AG04450 (cell line): ENCODE measurements at regions of chr2 and their contacts with region 1.

Region 1: GRCh38 chr2:163191372-163191771 is 352.8 kb upstream of the KCNH7 start:
- DNase-seq: no peak
- H3K4me3 ChIP-seq: no peak overlapping the region
- H3K27ac ChIP-seq: no peak overlapping the region
- H3K27me3 ChIP-seq: no peaks in the 10 kb centered on the region
- CTCF ChIP-seq: peak; percentile 73

Region 2: GRCh38 chr2:163207693-163208370 is 16.5 kb after region 1 on chr2:
- CTCF ChIA-PET with region 1: interaction called, 11 read pairs
- POLR2A ChIA-PET with region 1: no interaction called
- DNase-seq: no peak
- H3K4me3 ChIP-seq: no peak overlapping the region
- H3K27ac ChIP-seq: no peak overlapping the region
- H3K27me3 ChIP-seq: peaks cover 2% of the 10 kb centered on the region
- CTCF ChIP-seq: no peak

Region 3: DNA sequence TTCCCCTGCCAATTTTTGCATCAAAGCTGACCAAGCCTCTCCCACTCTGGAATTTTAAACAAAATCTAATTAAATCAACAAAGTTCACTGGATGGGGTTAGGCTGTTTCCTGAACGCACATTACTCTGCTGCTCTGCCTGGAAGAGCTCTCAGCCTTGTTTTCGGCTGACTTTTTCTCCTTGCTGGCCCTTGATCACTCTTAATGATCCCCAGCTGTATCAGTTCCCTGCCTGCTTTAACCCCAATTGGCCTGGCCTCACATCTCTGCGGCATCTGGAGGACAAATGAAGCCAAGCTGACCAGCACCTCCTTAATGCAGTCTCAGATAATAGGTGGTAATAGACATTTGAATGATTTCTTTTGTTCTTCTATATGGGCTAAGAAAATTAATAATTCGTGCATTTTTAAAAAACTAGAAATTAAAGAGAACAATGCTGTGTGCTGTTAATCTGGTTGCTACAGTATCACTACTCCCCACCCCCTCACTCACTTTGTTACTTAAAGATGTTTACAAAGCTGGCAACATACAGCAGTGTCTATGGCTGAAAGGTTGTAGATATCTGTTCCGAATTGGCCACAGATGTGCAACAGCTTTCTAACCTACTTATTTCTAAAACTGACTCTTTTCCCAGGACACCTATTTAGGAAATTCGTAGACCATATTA is 62.4 kb after region 1 on chr2:
- CTCF ChIA-PET with region 1: no interaction called
- POLR2A ChIA-PET with region 1: no interaction called
- DNase-seq: no peak
- H3K4me3 ChIP-seq: no peak overlapping the region
- H3K27ac ChIP-seq: no peak overlapping the region
- H3K27me3 ChIP-seq: no peaks in the 10 kb centered on the region
- CTCF ChIP-seq: no peak

Region 4: DNA sequence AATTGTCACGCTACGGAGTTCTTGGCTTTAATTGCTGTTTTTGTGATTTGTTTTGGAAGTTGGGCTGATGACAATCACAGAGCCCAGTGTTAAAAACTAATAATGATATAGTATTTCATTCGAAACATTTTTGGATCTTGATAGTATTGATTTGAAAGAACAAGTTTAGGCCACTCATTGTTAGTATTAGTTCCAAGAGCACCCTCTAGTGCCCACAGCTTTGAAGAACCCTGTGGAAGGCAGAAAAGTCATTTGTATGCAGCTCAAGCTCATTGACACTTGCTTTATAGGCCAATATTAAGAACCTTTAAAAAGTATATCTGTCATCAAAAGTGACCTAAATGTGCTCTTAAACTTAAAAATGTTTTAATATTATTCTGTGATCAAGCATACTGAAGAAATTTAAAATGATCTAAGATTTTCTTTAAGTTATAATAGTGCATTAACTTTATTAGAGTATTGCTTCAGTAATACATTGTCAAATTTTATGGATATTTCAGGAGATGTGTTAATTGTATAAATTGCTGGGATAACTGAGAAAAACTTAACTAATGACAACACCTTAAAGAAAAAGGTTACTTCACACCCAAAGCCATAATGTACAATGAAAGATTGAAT is 1238.9 kb after region 1 on chr2:
- CTCF ChIA-PET with region 1: interaction called, 11 read pairs
- POLR2A ChIA-PET with region 1: no interaction called
- DNase-seq: peak; percentile 4
- H3K4me3 ChIP-seq: no peak overlapping the region
- H3K27ac ChIP-seq: no peak overlapping the region
- H3K27me3 ChIP-seq: no peaks in the 10 kb centered on the region
- CTCF ChIP-seq: peak; percentile 74